OCI-LY7 (cell line): ENCODE measurements at regions of chr19 and their contacts with region 1.

Region 1: GRCh38 chr19:1863726-1864480 is 524 bp upstream of the KLF16 start:
- DNase-seq: peak; percentile 97
- H3K4me3 ChIP-seq: peak overlapping the region; percentile 72
- H3K27ac ChIP-seq: peak overlapping the region; percentile 82
- H3K4me1 ChIP-seq: peaks cover 36% of the 10 kb centered on the region
- CTCF ChIP-seq: no peak

Region 2: GRCh38 chr19:1360818-1361461 is 503.0 kb before region 1 on chr19:
- CTCF ChIA-PET with region 1: no interaction called
- POLR2A ChIA-PET with region 1: no interaction called
- intact Hi-C with region 1: no loop called
- DNase-seq: no peak
- H3K4me3 ChIP-seq: no peak overlapping the region
- H3K27ac ChIP-seq: no peak overlapping the region
- H3K4me1 ChIP-seq: peaks cover 11% of the 10 kb centered on the region
- CTCF ChIP-seq: no peak

Region 3: DNA sequence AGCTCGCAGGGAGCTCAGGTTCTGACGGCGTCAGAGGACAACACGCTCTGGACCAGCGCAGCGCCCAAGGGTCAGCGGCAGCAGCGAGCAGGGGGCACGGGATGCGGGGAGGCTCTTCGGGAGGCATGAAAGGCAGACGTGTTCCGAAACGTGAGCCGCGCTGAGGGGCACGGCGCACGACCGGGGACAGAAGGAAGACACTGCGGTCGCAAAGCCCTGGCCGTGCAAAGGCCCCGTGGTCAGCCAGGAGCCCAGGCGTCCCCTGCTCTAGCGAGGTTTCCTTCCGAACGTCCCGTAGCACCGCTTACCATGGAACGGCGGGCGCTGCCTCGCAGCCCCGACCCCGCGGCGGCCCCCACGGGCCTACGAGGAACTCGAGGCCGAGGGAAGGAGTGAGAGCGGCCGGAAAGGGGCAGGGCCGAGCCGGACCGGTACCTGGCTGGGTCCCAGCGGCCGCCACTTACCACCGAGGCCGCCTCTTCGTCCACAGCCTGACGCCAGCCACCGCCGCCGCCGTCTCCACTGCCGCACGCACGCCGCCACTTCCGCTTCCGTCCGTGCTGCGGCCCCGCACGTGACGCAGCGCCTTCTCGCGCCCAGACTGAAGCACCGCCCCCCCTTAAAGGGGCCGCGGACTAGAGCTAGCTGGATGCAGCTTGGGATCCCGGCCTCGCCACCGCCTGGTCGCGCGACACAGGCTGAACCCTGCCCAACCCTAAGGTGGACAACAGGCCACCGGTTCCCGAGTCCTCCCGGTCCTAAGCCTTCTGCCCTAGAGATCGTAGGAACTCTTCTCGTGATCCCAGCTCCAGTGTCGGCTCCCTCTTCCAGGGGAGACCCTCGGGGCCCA is 12.0 kb after region 1 on chr19:
- CTCF ChIA-PET with region 1: interaction called, 12 read pairs
- POLR2A ChIA-PET with region 1: interaction called, 4 read pairs
- intact Hi-C with region 1: no loop called
- DNase-seq: peak; percentile 94
- H3K4me3 ChIP-seq: peak overlapping the region; percentile 100
- H3K27ac ChIP-seq: peak overlapping the region; percentile 62
- H3K4me1 ChIP-seq: peaks cover 20% of the 10 kb centered on the region
- CTCF ChIP-seq: peak; percentile 66

Region 4: GRCh38 chr19:1882089-1882785 is 18.3 kb after region 1 on chr19:
- CTCF ChIA-PET with region 1: no interaction called
- POLR2A ChIA-PET with region 1: no interaction called
- intact Hi-C with region 1: loop called (anchors 2 kb)
- DNase-seq: peak; percentile 79
- H3K4me3 ChIP-seq: peak overlapping the region; percentile 98
- H3K27ac ChIP-seq: peak overlapping the region; percentile 71
- H3K4me1 ChIP-seq: peaks cover 30% of the 10 kb centered on the region
- CTCF ChIP-seq: no peak

Region 5: DNA sequence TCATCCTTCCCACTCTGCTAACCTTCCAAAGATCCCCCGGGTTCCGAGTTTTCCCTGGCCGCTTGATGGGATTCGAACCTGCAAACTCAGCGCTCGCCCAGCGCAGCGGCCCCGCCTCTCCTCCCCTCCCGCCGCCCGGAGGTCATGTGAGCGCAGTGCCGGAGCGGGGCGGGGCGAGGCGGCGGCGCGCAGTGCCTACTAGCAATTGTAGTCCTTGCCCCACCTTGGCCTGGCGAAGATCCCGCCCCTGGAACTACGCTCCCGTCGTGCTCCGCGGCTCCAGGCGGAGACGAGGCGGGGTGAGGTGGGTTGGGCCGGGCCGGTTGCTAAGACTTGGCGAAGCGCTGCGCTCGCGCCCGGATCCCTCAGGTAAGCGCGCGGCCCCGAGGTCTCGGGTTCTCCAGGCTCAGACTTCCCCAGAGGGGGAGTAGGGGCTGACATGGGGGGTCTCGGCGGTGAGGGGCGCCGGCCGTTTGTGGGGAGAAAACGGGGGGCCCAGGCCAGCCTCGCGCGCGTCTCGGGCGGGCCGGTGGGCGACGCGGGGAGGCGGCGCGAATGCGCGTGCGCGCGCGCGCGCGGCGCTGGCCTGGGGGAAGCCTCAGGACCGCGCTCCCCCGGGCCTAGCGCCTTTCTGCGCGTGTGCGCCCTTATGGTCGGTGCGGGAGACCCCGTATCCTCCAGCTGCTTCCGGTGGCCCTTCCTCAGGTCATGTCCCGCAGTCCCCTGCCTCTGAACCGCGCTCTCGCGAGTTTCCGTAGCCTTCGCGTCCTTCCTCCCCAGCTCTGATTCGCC is 41.4 kb after region 1 on chr19 and contains the starts of genes ADAT3 and SCAMP4:
- CTCF ChIA-PET with region 1: no interaction called
- POLR2A ChIA-PET with region 1: interaction called, 3 read pairs
- intact Hi-C with region 1: loop called (anchors 1 kb)
- DNase-seq: peak; percentile 99
- H3K4me3 ChIP-seq: peak within 1 kb of the TSS; percentile 71
- H3K27ac ChIP-seq: peak within 1 kb of the TSS; percentile 97
- H3K4me1 ChIP-seq: peaks cover 32% of the 10 kb centered on the region
- CTCF ChIP-seq: no peak
- total RNA-seq, gene ADAT3: 5.6 and 7.9 TPM in 2 replicates
- total RNA-seq, gene SCAMP4: 13.4 and 21.3 TPM in 2 replicates